MCF 10A (cell line): ENCODE measurements at regions of chr5 and their contacts with region 1.

Region 1: GRCh38 chr5:132490486-132491367 is at the start of gene IRF1:
- DNase-seq: peak; percentile 99
- H3K4me3 Mint-ChIP-seq: peak within 1 kb of the TSS; percentile 87
- H3K27ac Mint-ChIP-seq: peak within 1 kb of the TSS; percentile 84
- H3K4me1 Mint-ChIP-seq: peaks cover 50% of the 10 kb centered on the region
- H3K27me3 Mint-ChIP-seq: no peaks in the 10 kb centered on the region
- CTCF ChIP-seq: peak; percentile 11
- total RNA-seq, gene IRF1: 18.7 and 23.0 TPM in 2 replicates

Region 2: DNA sequence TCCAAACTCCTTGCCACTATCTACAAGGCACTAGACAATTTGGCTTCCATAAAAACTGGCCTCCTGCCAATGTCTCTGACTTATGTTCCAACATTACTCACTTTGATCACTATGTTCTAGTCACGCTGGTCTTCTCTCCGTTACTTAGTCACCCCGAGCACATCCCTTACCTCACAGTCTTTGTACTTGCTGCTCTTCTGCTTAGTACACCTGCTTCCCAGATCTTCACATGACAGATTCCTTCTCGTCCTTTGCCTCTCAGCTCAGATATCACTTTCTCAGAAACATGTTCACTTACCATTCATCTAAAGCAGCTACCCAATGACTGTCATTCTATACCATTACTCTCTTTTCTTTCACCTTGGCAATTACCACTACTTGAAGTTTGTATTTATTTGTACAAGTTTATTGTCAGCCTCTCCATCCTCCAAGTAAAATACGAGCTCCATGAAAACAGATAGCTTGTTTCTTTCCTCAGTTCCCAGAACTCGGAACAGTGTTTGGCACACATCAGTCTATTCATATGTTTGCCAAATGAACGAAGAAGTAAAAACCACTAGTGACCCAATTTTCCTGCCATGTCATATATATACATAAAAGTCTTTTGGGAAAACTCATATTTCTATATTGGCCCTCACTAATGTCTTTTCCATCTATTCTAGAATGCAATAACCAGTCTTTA is 127.2 kb before region 1 on chr5:
- CTCF ChIA-PET with region 1: interaction called, 33 read pairs
- POLR2A ChIA-PET with region 1: interaction called, 72 read pairs
- intact Hi-C with region 1: no loop called
- DNase-seq: peak; percentile 99
- H3K4me3 Mint-ChIP-seq: peak overlapping the region; percentile 45
- H3K27ac Mint-ChIP-seq: peak overlapping the region; percentile 99
- H3K4me1 Mint-ChIP-seq: peaks cover 52% of the 10 kb centered on the region
- H3K27me3 Mint-ChIP-seq: no peaks in the 10 kb centered on the region
- CTCF ChIP-seq: no peak

Region 3: DNA sequence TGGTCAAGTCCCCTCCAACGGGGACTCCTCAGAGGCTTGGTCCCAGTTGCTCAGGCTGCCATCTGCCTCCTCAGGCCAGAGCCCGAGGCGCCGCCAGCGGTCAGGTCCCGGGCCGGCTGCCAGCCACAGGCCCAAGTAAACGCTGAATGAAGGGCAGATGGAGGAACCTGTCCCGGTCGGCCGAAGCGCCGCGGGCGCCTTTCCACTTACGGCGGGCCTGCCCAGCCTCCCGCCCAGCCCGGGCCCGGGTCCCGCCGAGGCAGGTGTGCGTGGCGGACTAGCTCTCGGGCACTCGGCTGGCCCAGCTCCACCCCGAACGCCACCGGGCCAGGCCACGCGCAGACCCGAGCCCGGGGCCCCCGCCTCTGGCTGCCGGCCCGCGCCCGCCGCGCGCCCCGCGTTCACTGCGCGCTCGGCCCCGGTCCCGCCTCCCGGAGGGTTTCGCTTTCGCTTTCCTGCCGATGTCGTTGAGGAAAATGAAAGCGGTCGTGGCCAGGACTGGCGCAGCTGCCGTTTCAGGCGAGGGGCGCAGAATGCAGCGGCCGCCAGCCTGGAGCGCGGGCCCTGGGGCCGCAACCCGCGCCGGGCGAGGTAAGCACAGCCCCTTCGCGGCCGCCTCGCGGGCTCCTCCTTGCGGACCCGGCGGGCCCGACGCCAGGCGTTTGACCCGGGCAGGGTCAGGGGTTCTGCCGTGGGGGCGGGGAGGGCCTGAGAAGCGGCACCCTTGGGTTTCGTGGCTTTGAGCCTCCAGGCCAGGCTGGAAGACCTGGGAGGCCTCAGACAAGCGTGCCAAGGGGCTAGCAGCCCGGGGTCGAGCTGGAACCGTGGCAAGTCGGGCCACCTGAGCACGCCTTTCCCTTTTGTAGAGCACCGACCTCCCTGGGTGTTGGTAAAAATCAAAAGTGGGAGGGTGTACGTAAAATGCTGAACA is 80.0 kb before region 1 on chr5:
- CTCF ChIA-PET with region 1: interaction called, 89 read pairs
- POLR2A ChIA-PET with region 1: interaction called, 78 read pairs
- intact Hi-C with region 1: no loop called
- DNase-seq: peak; percentile 78
- H3K4me3 Mint-ChIP-seq: peak overlapping the region; percentile 80
- H3K27ac Mint-ChIP-seq: peak overlapping the region; percentile 93
- H3K4me1 Mint-ChIP-seq: peaks cover 27% of the 10 kb centered on the region
- H3K27me3 Mint-ChIP-seq: no peaks in the 10 kb centered on the region
- CTCF ChIP-seq: peak; percentile 95

Region 4: DNA sequence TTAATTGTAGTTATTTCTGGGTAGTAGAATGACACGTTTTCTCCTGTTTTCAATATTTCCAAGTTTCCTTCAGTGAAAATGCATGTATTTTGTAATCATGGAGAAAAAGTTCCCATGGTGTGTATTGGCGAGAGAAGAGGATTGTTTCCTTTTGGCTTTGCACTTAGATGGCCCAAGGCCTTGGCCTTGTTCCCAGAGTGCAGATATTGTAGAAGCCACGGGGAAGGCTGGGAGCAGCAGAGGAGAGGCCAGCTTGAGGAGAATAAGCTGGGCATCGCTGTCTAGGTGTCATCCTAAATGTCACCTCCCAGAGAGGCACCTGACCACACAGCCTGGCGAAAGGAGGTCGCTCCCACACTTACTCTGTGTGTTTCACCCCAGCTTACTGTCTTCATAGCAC is 44.1 kb before region 1 on chr5:
- CTCF ChIA-PET with region 1: interaction called, 7 read pairs
- POLR2A ChIA-PET with region 1: interaction called, 25 read pairs
- intact Hi-C with region 1: no loop called
- DNase-seq: peak; percentile 96
- H3K4me3 Mint-ChIP-seq: no peak overlapping the region
- H3K27ac Mint-ChIP-seq: peak overlapping the region; percentile 34
- H3K4me1 Mint-ChIP-seq: peaks cover 51% of the 10 kb centered on the region
- H3K27me3 Mint-ChIP-seq: no peaks in the 10 kb centered on the region
- CTCF ChIP-seq: no peak

Region 5: GRCh38 chr5:132473019-132473531 is 17.7 kb before region 1 on chr5:
- CTCF ChIA-PET with region 1: interaction called, 12 read pairs
- POLR2A ChIA-PET with region 1: interaction called, 47 read pairs
- intact Hi-C with region 1: no loop called
- DNase-seq: no peak
- H3K4me3 Mint-ChIP-seq: no peak overlapping the region
- H3K27ac Mint-ChIP-seq: no peak overlapping the region
- H3K4me1 Mint-ChIP-seq: peaks cover 7% of the 10 kb centered on the region
- H3K27me3 Mint-ChIP-seq: no peaks in the 10 kb centered on the region
- CTCF ChIP-seq: no peak

Region 6: GRCh38 chr5:132506094-132506692 is 15.5 kb after region 1 on chr5:
- CTCF ChIA-PET with region 1: interaction called, 58 read pairs
- POLR2A ChIA-PET with region 1: interaction called, 15 read pairs
- intact Hi-C with region 1: no loop called
- DNase-seq: peak; percentile 78
- H3K4me3 Mint-ChIP-seq: no peak overlapping the region
- H3K27ac Mint-ChIP-seq: no peak overlapping the region
- H3K4me1 Mint-ChIP-seq: peaks cover 23% of the 10 kb centered on the region
- H3K27me3 Mint-ChIP-seq: no peaks in the 10 kb centered on the region
- CTCF ChIP-seq: peak; percentile 47

Region 7: DNA sequence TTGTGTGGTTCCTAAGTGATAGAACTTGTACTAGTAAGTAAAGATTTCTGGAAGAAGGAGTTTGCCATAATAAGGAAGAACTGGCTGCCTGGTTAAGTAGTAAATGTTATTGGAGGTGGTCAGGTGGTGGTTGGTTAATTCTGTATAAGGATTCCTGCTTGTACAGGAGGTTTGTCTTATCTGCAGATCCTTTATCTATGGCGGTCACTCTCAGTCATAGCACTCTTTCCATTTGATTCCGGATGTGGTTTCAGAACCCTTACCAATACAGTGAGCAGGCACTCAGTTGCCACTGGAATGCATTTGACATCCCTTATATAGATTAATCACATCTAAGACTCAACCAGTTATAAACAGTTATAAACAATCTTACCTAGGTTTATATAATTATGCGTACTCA is 116.4 kb after region 1 on chr5:
- CTCF ChIA-PET with region 1: no interaction called
- POLR2A ChIA-PET with region 1: no interaction called
- intact Hi-C with region 1: no loop called
- DNase-seq: no peak
- H3K4me3 Mint-ChIP-seq: no peak overlapping the region
- H3K27ac Mint-ChIP-seq: no peak overlapping the region
- H3K4me1 Mint-ChIP-seq: no peaks in the 10 kb centered on the region
- H3K27me3 Mint-ChIP-seq: no peaks in the 10 kb centered on the region
- CTCF ChIP-seq: no peak